RWPE1 (cell line): ENCODE measurements at regions of chr10 and their contacts with region 1.

Region 1: DNA sequence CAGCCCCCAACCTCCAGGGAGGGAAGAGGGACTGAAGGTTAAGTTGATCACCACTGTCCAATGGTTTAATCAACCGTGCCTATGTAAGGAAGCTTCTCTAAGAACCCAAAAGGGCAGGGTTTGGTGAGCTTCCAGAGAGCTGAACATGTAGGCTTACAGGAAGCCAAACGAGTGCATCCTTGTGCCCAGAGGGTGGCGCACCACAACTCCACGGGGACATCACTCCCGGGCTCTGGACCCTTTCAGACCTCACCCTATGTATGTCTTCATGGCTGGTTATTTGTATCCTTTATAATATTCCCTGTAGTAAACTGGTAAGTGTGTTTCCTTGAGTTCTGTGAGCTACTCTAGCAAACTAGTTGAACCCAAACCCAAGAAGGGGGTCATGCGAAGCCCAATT is 11.5 kb upstream of the NFKB2 start:
- DNase-seq: no peak
- H3K27ac ChIP-seq: no peak overlapping the region
- CTCF ChIP-seq: no peak

Region 2: DNA sequence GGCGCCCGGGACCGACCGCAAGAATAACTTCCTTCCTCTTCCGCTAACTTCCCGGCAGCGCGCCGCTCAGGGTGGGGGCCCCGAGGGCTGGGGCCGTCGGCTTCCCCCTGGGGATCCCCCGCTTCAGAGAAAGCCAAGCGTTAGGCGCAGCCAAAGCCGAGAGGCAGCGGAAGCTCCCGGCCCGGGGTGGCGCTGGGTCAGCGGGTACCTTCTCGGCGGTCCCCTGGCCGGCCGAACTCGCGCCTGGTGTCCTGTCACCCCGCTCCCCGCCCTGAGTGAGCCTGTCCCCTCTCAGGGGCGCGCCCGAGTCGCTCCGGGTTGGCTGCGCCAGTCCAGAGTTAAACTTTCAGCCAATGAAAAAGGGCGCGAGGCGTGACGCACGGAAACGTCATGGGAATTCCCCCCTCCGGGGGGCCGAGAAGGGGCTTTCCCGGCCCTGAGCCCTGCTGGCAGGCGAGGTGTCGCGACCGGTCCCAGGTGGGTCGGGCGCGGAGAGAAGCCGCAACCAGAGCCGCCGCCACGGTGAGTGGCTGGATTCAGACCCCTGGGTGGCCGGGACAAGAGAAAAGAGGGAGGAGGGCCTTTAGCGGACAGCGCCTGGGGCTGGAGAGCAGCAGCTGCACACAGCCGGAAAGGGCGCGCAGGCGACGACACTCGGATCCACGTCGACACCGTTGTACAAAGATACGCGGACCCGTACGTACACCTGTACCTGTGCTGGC is 10.2 kb after region 1 on chr10:
- CTCF ChIA-PET with region 1: interaction called, 12 read pairs
- POLR2A ChIA-PET with region 1: interaction called, 3 read pairs
- DNase-seq: peak; percentile 97
- H3K27ac ChIP-seq: peak overlapping the region; percentile 85
- CTCF ChIP-seq: peak; percentile 66

Region 3: GRCh38 chr10:102399217-102400089 is 15.4 kb after region 1 on chr10:
- CTCF ChIA-PET with region 1: interaction called, 12 read pairs
- POLR2A ChIA-PET with region 1: no interaction called
- DNase-seq: peak; percentile 84
- H3K27ac ChIP-seq: peak overlapping the region; percentile 85
- CTCF ChIP-seq: peak; percentile 96

Region 4: DNA sequence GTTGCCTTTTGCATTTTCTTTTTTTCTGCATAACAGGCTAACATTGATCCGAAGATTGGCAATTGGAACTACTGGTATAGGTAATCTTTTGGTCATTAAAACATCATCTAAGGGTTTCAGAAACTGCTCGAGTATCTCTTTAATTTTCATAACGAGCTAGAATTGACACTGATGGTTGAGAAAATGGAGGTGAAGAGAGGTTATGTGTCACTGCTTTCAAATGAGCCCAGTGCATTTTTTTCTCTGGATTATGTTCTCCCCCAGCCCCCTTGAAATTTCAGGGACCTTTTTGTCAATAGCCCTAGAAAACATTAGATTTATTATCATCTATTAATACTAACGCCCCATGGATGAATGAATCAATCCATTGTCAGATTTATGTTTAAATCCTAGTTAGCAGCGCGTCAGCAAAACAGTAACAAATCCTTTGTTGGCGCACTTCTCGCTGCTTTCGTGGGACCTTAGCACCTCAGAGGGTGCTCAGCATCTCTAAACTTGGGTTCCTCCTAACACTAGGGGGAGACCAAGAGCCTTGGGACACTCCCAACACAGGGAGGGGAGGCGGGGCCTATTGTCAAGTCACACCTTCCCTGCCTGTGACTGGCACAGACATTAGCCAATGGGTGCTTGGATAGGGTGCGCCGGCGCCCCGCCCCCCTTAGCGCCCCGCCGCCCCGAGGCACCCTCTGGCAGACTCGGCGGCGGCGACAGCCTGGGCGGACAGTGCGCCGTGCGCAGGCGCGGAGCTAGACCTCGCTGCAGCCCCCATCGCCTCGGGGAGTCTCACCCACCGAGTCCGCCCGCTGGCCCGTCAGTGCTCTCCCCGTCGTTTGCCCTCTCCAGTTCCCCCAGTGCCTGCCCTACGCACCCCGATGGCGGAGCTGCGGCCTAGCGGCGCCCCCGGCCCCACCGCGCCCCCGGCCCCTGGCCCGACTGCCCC is 119.5 kb after region 1 on chr10 and contains the start of gene SUFU:
- CTCF ChIA-PET with region 1: no interaction called
- POLR2A ChIA-PET with region 1: no interaction called
- DNase-seq: peak; percentile 100
- H3K27ac ChIP-seq: peak within 1 kb of the TSS; percentile 85
- CTCF ChIP-seq: peak; percentile 91

Region 5: DNA sequence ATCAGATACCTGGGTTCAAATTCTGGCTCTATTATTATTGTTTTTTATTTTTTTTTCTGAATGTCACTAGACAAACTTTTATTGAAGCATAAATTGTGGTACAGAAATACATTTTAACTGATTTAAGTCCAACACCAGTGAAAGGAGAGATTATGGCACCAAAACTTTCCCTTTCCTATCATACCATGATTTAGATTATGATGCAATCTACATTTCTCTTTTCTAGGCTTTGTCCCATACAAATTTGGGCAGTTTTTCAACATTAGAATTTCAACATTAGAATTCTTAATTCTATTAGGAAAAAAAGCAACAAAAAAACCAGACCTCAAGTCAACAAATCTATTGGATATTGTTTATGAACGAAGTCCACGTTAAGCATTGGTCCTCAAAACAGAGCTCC is 496.2 kb after region 1 on chr10:
- CTCF ChIA-PET with region 1: no interaction called
- POLR2A ChIA-PET with region 1: interaction called, 11 read pairs
- DNase-seq: no peak
- H3K27ac ChIP-seq: no peak overlapping the region
- CTCF ChIP-seq: no peak